ENCODE measurements at regions of chr15 and their contacts with region 1.

Region 1: DNA sequence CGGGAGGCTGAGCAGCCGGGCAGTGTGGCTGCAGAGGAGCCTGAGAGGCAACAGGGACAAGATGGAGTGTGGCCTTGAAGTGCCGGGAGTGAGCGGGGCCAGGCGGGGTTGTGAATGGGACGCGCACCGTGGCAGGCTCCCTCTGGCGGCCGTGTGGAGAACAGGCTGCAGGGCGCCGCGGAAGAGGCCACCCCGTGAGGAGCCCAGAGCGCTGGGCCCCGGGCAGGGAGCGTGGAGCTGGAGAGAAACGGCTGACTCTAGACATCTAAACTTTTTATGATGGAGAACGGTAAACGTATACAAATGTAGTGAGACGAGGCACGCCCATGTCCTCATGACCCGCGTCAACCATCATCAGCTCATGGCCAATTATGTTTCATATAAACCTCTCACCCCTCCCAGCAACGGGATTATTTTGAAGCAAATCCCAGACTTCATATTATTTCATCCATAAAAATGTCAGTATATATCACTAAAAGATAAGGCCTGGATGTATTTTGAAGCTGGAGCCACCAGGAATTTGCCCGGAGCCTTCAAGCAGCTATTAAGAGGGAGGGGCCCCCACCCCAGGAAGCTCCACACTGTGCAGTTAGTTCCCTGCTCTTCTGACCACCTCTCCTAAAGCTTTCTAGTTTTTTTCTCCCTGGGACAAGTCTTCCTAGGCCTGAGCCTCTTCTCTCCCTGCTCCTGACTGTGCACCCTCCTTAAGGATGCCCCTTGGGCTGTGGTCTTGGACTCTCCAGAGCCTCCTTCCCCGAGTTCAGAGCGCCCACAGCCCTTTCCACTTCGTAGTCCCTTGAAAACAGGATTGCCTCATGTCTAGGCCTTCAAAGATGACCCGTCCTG is 149.4 kb downstream of the SMAD6 start:
- DNase-seq: peak; percentile 70
- ATAC-seq: peak; percentile 99
- H3K4me3 Mint-ChIP-seq: peak overlapping the region; percentile 38
- H3K27ac Mint-ChIP-seq: no peak overlapping the region
- H3K4me1 Mint-ChIP-seq: peaks cover 13% of the 10 kb centered on the region
- H3K27me3 Mint-ChIP-seq: peaks cover 13% of the 10 kb centered on the region
- CTCF ChIP-seq: peak; percentile 55

Region 2: GRCh38 chr15:65249641-65250040 is 1601.8 kb before region 1 on chr15:
- CTCF ChIA-PET with region 1: no interaction called
- POLR2A ChIA-PET with region 1: interaction called, 13 read pairs
- intact Hi-C with region 1: no loop called
- DNase-seq: no peak
- ATAC-seq: peak; percentile 45
- H3K4me3 Mint-ChIP-seq: no peak overlapping the region
- H3K27ac Mint-ChIP-seq: no peak overlapping the region
- H3K4me1 Mint-ChIP-seq: peaks cover 2% of the 10 kb centered on the region
- H3K27me3 Mint-ChIP-seq: no peaks in the 10 kb centered on the region
- CTCF ChIP-seq: no peak

Region 3: DNA sequence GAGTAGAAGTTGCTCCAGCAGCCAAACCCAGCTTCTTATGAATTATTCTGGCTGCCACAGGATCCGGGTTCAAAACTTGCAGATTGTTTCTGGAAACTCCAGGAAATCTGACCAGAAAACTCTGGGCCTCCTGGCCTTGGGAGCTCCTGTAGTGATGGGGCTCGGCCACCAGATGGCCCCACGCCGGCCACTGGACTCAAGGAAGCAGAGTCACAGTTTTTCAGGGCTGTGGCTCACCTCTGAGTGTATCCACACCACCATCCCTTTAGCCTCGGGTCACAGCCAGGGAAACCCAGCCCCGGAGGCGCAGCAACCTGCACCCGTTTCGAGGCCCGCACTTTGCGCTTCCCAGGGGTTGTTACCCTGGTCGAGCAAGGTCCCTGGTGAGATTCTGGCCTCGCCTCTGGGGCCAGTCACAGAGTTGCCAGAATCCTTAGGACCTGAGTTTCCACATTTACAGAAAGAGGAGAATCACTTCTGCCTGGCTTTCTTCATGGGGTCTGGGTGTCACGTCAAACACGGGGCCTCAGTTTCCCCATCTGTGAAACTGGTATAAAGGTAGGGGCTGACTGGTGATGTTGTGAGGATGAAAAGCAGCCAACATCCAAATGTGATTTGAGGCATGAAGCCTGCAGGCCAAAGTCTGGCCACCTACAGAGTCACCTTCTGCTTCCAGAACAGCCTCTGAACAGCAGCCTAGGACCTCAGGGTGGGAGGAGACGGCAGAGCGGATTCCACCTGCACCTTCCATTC is 232.1 kb before region 1 on chr15:
- CTCF ChIA-PET with region 1: interaction called, 23 read pairs
- POLR2A ChIA-PET with region 1: no interaction called
- intact Hi-C with region 1: loop called (anchors 1 kb)
- DNase-seq: peak; percentile 27
- ATAC-seq: peak; percentile 54
- H3K4me3 Mint-ChIP-seq: no peak overlapping the region
- H3K27ac Mint-ChIP-seq: no peak overlapping the region
- H3K4me1 Mint-ChIP-seq: peaks cover 33% of the 10 kb centered on the region
- H3K27me3 Mint-ChIP-seq: peaks cover 25% of the 10 kb centered on the region
- CTCF ChIP-seq: no peak

Region 4: DNA sequence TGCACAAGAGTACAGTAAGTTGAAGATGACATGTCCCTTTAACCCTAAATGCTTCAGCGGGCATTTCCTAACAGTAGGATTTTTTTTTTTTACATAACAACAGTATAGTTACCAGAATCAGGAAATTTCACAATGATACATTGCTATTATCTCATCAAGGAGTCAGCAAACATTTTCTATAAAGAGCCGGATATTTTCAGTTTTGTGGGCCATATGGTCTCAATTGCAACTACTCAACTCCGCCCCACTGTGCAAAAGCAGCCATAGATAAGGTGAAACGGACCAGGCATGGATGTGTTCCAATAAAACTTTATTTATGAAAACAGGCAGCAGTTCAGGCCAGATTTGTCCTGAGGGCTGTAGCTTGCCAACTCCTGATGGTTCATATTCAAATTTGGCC is 18.8 kb before region 1 on chr15:
- CTCF ChIA-PET with region 1: interaction called, 8 read pairs
- POLR2A ChIA-PET with region 1: no interaction called
- intact Hi-C with region 1: loop called (anchors 2 kb)
- DNase-seq: no peak
- ATAC-seq: no peak
- H3K4me3 Mint-ChIP-seq: peak overlapping the region; percentile 50
- H3K27ac Mint-ChIP-seq: peak overlapping the region; percentile 8
- H3K4me1 Mint-ChIP-seq: peaks cover 46% of the 10 kb centered on the region
- H3K27me3 Mint-ChIP-seq: no peaks in the 10 kb centered on the region
- CTCF ChIP-seq: no peak

Region 5: GRCh38 chr15:67433495-67434099 is 582.1 kb after region 1 on chr15:
- CTCF ChIA-PET with region 1: no interaction called
- POLR2A ChIA-PET with region 1: interaction called, 11 read pairs
- intact Hi-C with region 1: no loop called
- DNase-seq: no peak
- ATAC-seq: peak; percentile 50
- H3K4me3 Mint-ChIP-seq: no peak overlapping the region
- H3K27ac Mint-ChIP-seq: no peak overlapping the region
- H3K4me1 Mint-ChIP-seq: no peaks in the 10 kb centered on the region
- H3K27me3 Mint-ChIP-seq: peaks cover 3% of the 10 kb centered on the region
- CTCF ChIP-seq: no peak

Measured in activated B cell treated with CpG ODN at 0.5 μM for 24 hours (primary cell).